Vagina (tissue), 2 donors: ENCODE measurements at regions of chr13 and their contacts with region 1.

Region 1: DNA sequence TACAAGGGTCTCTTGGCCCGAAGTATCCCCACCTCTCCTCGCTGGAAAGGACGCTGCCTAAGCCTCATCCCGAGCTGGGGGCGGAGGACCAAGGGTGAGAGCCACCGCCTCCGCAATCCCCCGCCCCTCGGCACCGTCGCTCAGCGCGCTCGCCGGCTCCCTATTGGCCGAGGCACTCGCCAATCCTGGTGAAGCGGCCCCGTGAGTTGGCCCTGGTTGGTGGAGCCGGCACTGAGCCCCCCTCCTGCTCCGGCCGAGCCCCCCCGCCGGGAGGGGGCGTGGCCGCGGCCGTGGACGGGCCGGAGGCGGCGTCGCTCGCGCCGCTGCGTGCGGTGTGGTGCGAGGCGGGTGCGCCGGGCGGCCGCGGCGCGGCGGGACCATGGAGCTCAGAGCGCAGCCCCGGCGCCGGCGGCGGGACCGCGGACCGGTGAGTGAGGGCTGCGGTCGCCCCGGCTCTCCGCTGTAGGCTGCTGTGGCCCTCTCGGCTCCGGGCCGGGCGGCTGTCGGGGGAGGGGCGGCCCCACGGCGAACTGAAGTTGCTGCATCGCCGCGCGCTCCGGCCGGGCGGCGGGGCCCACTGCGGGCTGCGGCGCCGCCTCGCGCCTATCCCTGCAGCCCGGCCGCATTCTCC is at the start of gene WASF3:
- DNase-seq: peak in 1 of 2 donors; percentile 93
- H3K4me3 ChIP-seq: peak within 1 kb of the TSS; percentile 64 to 96
- H3K27ac ChIP-seq: peak within 1 kb of the TSS; percentile 34
- H3K4me1 ChIP-seq: peaks cover 10% of the 10 kb centered on the region
- H3K27me3 ChIP-seq: no peaks in the 10 kb centered on the region
- CTCF ChIP-seq: no peak
- POLR2A ChIP-seq: peak in 1 of 2 donors; percentile 61
- total RNA-seq, gene WASF3: 20.4 TPM

Region 2: GRCh38 chr13:26221721-26222519 is 335.6 kb before region 1 on chr13 and contains the start of gene RNF6:
- intact Hi-C with region 1: loop called (anchors 5 kb)
- DNase-seq: peak in 1 of 2 donors; percentile 97
- H3K4me3 ChIP-seq: peak within 1 kb of the TSS; percentile 82 to 97
- H3K27ac ChIP-seq: peak within 1 kb of the TSS; percentile 91
- H3K4me1 ChIP-seq: peaks cover 24% of the 10 kb centered on the region
- H3K27me3 ChIP-seq: no peaks in the 10 kb centered on the region
- CTCF ChIP-seq: no peak
- POLR2A ChIP-seq: no peak
- total RNA-seq, gene RNF6: 22.1 TPM